ENCODE measurements at regions of chr19 and their contacts with region 1.

Region 1: DNA sequence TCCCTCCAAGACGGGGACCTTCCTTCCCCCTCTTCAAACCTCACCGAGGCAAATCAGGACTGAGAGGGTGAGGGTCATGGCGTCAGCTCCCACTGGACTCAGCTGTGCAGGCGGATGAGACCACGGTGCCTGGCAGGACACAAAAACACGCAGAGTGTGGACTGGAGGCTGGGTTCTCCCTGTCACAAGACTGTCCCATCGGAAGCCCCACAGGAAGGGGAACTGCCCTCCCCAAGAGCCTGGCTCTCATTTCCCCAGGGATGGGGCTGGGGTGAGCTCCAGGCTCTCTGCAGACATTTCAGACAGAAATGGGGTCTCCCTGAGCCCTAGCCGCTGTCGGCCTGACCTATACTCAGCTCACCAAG is at the start of gene LILRB5:
- DNase-seq: no peak
- H3K4me3 ChIP-seq: no peak within 1 kb of the TSS
- H3K4me3 Mint-ChIP-seq: peak within 1 kb of the TSS in 1 of 2 donors; percentile 52
- H3K27ac ChIP-seq: no peak within 1 kb of the TSS
- H3K27ac Mint-ChIP-seq: peak within 1 kb of the TSS in 3 of 7 donors; percentile 7 to 70 (median 8)
- H3K4me1 ChIP-seq: peaks cover 10 to 22% of the 10 kb centered on the region in 2 donors
- H3K4me1 Mint-ChIP-seq: peaks cover 20% of the 10 kb centered on the region
- H3K27me3 ChIP-seq: peaks cover 0 to 5% of the 10 kb centered on the region in 2 donors
- H3K27me3 Mint-ChIP-seq: peaks cover 16 to 18% (median 18%) of the 10 kb centered on the region in 3 donors
- CTCF ChIP-seq: no peak
- polyA plus RNA-seq, gene LILRB5: 0.14 to 1.1 (median 0.17) TPM

Region 2: GRCh38 chr19:53892981-53893325 is 364.1 kb before region 1 on chr19:
- intact Hi-C with region 1: no loop called
- DNase-seq: no peak
- H3K4me3 ChIP-seq: no peak overlapping the region
- H3K4me3 Mint-ChIP-seq: no peak overlapping the region
- H3K27ac ChIP-seq: no peak overlapping the region
- H3K27ac Mint-ChIP-seq: no peak overlapping the region
- H3K4me1 ChIP-seq: peaks cover 9 to 10% of the 10 kb centered on the region in 2 donors
- H3K4me1 Mint-ChIP-seq: peaks cover 3% of the 10 kb centered on the region
- H3K27me3 ChIP-seq: peaks cover 8 to 24% of the 10 kb centered on the region in 2 donors
- H3K27me3 Mint-ChIP-seq: peaks cover 35 to 57% (median 53%) of the 10 kb centered on the region in 3 donors
- CTCF ChIP-seq: no peak

Region 3: DNA sequence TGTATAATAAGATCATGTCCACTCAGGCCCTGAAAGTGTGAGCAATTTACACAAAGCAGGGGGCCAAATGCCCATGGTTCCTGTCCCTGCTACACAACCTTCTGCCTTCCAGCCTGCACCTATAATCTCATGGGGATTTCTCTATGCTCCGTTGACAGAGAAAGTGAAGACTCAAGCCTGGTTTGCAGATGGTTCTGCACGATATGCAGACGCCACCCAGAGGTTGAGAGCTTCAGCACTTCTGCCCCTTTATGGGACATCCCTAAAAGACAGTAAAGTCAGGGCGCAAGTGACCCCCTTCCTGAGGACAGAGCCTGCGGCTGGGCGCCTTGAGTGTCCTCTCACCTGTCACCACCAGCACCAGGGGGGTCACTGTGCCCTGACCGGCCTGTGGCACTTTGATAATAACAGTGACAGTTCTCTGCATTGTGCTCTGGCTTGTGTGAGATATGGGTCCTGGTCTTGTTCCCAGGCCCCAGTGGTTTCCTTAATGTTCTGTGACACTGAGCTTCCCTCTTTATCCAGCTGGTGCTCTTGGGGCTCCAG is 40.7 kb after region 1 on chr19:
- intact Hi-C with region 1: loop called in 1 of 2 experiments (anchors 5 kb)
- DNase-seq: peak in 2 of 3 donors; percentile 34
- H3K4me3 ChIP-seq: no peak overlapping the region
- H3K4me3 Mint-ChIP-seq: no peak overlapping the region
- H3K27ac ChIP-seq: no peak overlapping the region
- H3K27ac Mint-ChIP-seq: peak overlapping the region in 3 of 7 donors; percentile 50 to 69 (median 66)
- H3K4me1 ChIP-seq: peaks cover 41 to 46% of the 10 kb centered on the region in 2 donors
- H3K4me1 Mint-ChIP-seq: peaks cover 48% of the 10 kb centered on the region
- H3K27me3 ChIP-seq: peaks cover 2 to 7% of the 10 kb centered on the region in 2 donors
- H3K27me3 Mint-ChIP-seq: peaks cover 9 to 18% (median 11%) of the 10 kb centered on the region in 3 donors
- CTCF ChIP-seq: peak; percentile 31

Region 4: GRCh38 chr19:54339646-54340358 is 82.7 kb after region 1 on chr19:
- intact Hi-C with region 1: no loop called
- DNase-seq: peak; percentile 58 to 70 (median 67)
- H3K4me3 ChIP-seq: peak overlapping the region in 1 of 3 experiments; percentile 14
- H3K4me3 Mint-ChIP-seq: peak overlapping the region; percentile 53 to 68
- H3K27ac ChIP-seq: no peak overlapping the region
- H3K27ac Mint-ChIP-seq: peak overlapping the region in 6 of 7 donors; percentile 34 to 85 (median 65)
- H3K4me1 ChIP-seq: peaks cover 41 to 46% of the 10 kb centered on the region in 2 donors
- H3K4me1 Mint-ChIP-seq: peaks cover 51% of the 10 kb centered on the region
- H3K27me3 ChIP-seq: no peaks in the 10 kb centered on the region
- H3K27me3 Mint-ChIP-seq: peaks cover 0 to 5% (median 2%) of the 10 kb centered on the region in 3 donors
- CTCF ChIP-seq: no peak